Activated CD8-positive, alpha-beta T cell treated with anti-CD3 and anti-CD28 coated beads for 36 hours (primary cell): ENCODE measurements at regions of chr16 and their contacts with region 1.

Region 1: DNA sequence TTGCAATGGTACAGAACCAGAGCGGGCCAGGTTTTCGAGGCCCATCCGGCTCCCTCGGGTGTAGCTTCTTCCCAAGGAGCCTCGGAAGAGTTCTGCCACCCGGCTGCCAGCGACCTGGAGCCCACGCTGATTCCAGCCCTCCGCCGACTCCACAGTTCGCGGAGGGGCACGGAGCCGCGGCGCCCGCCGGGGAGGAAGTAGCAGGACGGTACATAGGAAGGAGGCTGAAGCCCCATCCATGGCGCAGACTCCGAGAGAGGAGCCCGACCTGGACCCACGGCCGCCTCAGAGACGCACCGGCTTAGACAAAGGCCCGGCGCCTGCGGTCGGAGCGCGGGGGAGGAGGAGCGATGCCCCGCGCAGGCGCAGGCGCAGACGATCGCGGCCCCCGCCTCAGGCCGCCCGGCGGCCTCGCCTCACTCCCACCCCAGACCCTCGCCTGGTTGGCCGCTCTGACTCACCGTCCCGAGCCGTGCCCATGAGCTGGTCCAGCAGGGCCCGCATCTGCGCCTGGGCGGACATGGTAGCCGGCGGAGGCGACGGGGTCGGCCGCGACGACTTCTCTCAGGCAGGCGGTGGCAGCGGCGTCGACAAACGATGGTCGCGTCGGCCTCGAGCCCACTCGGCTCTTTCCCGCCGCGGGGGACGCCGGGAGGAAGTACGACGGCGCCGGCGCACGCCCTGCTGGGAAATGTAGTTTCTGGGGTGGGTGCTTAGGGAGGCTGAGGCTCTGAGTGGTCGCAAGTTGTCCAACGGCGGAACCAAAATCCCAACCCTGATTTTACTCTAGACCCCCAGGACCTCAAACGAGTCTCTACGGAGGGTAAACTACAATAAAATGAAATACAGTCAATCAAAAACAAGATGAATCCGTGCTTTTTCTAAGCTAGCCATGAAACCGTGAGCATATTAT is at the start of gene LUC7L:
- DNase-seq: peak; percentile 93
- ATAC-seq: peak; percentile 93
- H3K4me3 Mint-ChIP-seq: peak within 1 kb of the TSS; percentile 92
- H3K27ac Mint-ChIP-seq: peak within 1 kb of the TSS; percentile 93
- H3K4me1 Mint-ChIP-seq: peaks cover 32% of the 10 kb centered on the region
- H3K27me3 Mint-ChIP-seq: no peaks in the 10 kb centered on the region
- CTCF ChIP-seq: no peak
- total RNA-seq, gene LUC7L: 68.0 to 72.8 TPM

Region 2: DNA sequence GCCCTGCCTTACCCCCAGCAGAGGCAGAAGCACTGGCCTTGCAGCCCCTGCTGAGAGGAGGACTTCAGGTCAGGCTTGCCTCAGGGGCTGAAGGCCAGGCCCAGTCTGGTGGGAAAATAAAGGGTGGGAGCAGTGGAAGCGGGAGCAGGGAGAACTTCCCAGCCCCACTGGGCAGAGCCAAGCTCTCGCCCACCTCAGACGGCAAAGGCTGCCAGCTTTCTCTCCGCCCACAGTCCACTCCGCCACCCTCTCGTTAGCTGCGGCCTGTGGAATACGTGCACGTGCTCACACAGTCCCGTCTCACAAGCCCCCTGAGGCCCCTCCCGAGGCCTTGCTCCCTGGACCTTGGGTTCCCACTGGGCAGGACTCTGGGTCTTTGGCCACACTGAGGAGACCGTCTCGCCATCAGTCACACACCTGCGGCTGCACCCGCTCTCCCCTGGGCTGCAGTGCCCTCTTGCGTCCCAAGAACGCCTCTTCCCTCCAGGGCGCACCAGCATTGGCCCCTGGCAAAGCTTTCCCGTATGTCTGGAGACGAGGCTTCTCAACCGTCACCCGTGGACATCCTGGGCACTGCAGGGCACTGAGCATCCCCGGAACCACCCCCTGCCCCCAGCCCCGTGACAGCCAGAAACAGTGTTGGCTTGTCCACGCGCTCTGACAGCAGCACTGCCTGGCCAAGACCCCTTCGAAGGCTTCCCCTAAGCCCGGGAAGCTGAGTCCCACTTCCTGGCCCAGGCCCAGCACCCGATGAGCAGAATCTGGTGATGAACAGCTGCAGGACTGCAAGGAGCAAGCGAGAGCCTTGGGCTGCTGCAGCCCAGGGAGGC is 133.0 kb after region 1 on chr16:
- CTCF ChIA-PET with region 1: interaction called, 18 read pairs
- POLR2A ChIA-PET with region 1: interaction called, 5 read pairs
- intact Hi-C with region 1: loop called (anchors 10 kb)
- DNase-seq: peak; percentile 84
- ATAC-seq: peak; percentile 93
- H3K4me3 Mint-ChIP-seq: no peak overlapping the region
- H3K27ac Mint-ChIP-seq: no peak overlapping the region
- H3K4me1 Mint-ChIP-seq: peaks cover 6% of the 10 kb centered on the region
- H3K27me3 Mint-ChIP-seq: no peaks in the 10 kb centered on the region
- CTCF ChIP-seq: peak; percentile 86